Activated CD8-positive, alpha-beta T cell treated with anti-CD3 and anti-CD28 coated beads for 36 hours (primary cell): ENCODE measurements at regions of chr6 and their contacts with region 1.

Region 1: DNA sequence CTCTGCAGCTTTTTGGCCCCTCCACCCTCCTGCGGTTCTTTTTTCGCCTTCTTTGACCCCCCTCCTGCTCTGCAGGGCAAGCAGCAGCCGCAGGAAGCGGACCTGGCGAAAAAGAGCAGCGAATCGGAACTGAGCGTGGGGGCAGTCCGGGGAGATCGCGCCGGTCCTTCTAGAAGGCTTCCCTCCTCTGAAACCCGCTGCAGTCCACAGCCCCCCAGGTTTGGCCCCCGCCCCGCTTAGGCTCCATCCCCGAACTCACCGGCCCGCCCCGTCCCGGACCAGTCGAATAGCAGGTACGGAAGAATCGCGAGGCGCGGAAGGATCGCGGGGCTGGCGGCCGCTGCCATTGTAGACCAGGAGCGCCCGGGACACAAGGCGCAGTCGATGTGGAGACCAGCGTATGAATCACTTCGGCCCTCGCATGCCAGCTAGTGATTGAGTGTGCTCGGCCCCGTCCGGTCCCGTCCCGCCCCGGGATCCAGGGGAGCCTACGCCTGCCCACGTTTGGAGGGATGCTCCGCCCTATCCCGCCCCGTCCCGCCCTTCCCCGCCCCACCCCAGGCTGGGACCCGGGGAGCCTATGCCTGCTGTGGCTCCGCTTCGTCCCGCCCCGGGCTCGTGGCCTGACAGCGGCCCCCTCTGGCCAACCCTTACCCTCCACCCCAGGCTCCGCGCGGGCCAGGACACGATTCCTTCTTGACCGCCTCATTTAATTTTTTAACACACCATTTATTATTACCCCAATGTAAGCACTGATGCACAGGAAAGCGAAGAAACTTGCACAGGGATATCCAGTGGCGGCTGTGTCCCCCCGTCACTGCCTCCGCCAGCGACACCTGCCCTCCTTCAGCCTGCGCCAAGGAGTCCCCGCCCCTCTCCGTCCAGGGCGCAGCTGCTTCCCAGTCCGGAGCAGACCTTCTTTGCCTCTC is at the start of gene ULBP3:
- DNase-seq: peak; percentile 81
- ATAC-seq: peak; percentile 89
- H3K4me3 Mint-ChIP-seq: peak within 1 kb of the TSS; percentile 72
- H3K27ac Mint-ChIP-seq: no peak within 1 kb of the TSS
- H3K4me1 Mint-ChIP-seq: peaks cover 11% of the 10 kb centered on the region
- H3K27me3 Mint-ChIP-seq: peaks cover 9% of the 10 kb centered on the region
- CTCF ChIP-seq: peak; percentile 49
- total RNA-seq, gene ULBP3: 0.47 to 0.77 TPM

Region 2: GRCh38 chr6:149934249-149935156 is 134.5 kb before region 1 on chr6:
- CTCF ChIA-PET with region 1: no interaction called
- POLR2A ChIA-PET with region 1: no interaction called
- intact Hi-C with region 1: no loop called
- DNase-seq: peak; percentile 89
- ATAC-seq: peak; percentile 53
- H3K4me3 Mint-ChIP-seq: no peak overlapping the region
- H3K27ac Mint-ChIP-seq: no peak overlapping the region
- H3K4me1 Mint-ChIP-seq: peaks cover 19% of the 10 kb centered on the region
- H3K27me3 Mint-ChIP-seq: peaks cover 71% of the 10 kb centered on the region
- CTCF ChIP-seq: peak; percentile 79

Region 3: DNA sequence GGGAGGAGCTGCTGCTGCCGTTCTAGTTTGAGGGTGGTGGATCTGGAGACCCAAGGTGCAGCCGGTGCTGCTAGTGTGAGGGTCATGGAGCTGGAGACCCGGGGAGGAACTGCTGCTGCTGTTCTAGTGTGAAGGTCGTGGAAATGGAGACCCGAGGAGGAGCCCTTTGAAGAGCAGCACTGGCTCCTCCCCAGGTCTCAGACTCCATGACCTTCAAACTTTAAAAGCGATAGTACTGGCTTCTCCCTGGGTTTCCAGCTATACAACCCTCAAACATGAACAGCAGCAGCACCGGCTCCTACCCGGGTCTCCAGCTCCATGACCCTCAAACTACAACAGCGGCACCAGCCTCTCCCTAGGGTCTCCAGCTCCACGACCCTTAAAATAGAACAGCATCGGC is 15.5 kb before region 1 on chr6:
- CTCF ChIA-PET with region 1: interaction called, 24 read pairs
- POLR2A ChIA-PET with region 1: no interaction called
- intact Hi-C with region 1: no loop called
- DNase-seq: no peak
- ATAC-seq: no peak
- H3K4me3 Mint-ChIP-seq: no peak overlapping the region
- H3K27ac Mint-ChIP-seq: no peak overlapping the region
- H3K4me1 Mint-ChIP-seq: no peaks in the 10 kb centered on the region
- H3K27me3 Mint-ChIP-seq: peaks cover 55% of the 10 kb centered on the region
- CTCF ChIP-seq: no peak

Region 4: DNA sequence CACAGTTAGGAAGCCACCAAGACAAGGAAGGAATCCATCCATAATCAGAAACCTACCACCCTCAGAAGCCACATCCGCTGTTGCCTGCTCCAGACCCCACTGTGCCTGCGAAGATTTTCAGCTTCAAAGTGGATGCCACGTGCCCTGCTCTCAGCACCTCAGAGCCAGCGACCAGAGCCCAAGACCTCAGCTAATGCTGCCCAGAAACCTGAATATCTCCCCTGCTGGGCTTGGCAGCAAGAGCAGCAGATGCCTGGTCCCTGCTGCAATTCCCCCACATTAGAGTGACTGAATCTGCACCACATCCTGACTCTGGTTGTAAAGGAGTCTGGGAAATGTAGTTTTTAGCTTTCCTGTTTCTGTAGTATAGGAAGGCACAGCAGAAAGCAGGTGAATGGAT is 10.6 kb after region 1 on chr6:
- CTCF ChIA-PET with region 1: interaction called, 19 read pairs
- POLR2A ChIA-PET with region 1: no interaction called
- intact Hi-C with region 1: no loop called
- DNase-seq: peak; percentile 49
- ATAC-seq: peak; percentile 70
- H3K4me3 Mint-ChIP-seq: no peak overlapping the region
- H3K27ac Mint-ChIP-seq: no peak overlapping the region
- H3K4me1 Mint-ChIP-seq: peaks cover 20% of the 10 kb centered on the region
- H3K27me3 Mint-ChIP-seq: peaks cover 16% of the 10 kb centered on the region
- CTCF ChIP-seq: no peak

Region 5: GRCh38 chr6:150191809-150192208 is 122.8 kb after region 1 on chr6:
- CTCF ChIA-PET with region 1: no interaction called
- POLR2A ChIA-PET with region 1: no interaction called
- intact Hi-C with region 1: no loop called
- DNase-seq: no peak
- ATAC-seq: no peak
- H3K4me3 Mint-ChIP-seq: no peak overlapping the region
- H3K27ac Mint-ChIP-seq: no peak overlapping the region
- H3K4me1 Mint-ChIP-seq: no peaks in the 10 kb centered on the region
- H3K27me3 Mint-ChIP-seq: peaks cover 15% of the 10 kb centered on the region
- CTCF ChIP-seq: no peak

Region 6: GRCh38 chr6:150395398-150396009 is 326.5 kb after region 1 on chr6:
- CTCF ChIA-PET with region 1: interaction called, 162 read pairs
- POLR2A ChIA-PET with region 1: no interaction called
- intact Hi-C with region 1: loop called (anchors 5 kb)
- DNase-seq: peak; percentile 61
- ATAC-seq: peak; percentile 71
- H3K4me3 Mint-ChIP-seq: no peak overlapping the region
- H3K27ac Mint-ChIP-seq: no peak overlapping the region
- H3K4me1 Mint-ChIP-seq: no peaks in the 10 kb centered on the region
- H3K27me3 Mint-ChIP-seq: peaks cover 5% of the 10 kb centered on the region
- CTCF ChIP-seq: peak; percentile 64

Region 7: DNA sequence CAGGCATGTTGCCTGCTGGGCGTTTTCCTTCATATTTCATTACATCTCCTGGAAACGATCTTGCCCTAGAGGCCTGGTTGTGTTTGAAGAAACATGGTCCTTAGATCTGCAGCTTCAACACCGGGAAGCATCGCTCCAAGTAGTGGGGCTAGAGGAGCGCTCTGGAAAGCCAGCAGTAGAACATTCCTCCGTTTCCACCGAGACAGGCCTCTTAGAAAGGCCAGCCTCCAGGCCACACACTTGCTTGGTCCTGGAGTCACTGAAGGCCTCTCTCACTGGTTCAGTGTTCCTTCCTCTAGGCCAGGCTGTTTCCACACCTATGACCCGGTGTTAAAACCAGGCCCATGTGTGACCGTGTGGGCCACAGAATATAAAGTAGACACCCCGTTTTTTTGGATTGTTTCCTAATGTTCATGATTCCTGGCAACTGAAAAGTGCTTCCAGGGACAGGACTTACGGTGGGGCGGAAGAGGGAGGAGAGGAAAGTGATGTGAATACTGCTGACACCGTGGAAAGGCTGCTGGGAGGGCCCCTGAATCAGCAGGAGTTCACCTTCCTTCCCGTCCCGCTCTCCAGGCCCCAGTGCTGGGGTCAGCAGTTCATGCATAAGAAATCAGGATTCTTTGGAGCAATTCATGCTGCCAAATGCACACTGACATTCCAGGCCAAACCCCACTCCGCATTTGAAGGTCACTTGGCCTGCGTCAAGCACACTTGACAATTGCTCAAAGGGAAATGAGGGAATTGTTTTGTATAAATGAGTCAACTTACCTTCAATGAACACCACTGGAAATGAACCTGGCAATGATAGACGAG is 383.7 kb after region 1 on chr6:
- CTCF ChIA-PET with region 1: no interaction called
- POLR2A ChIA-PET with region 1: no interaction called
- intact Hi-C with region 1: no loop called
- DNase-seq: no peak
- ATAC-seq: no peak
- H3K4me3 Mint-ChIP-seq: no peak overlapping the region
- H3K27ac Mint-ChIP-seq: no peak overlapping the region
- H3K4me1 Mint-ChIP-seq: no peaks in the 10 kb centered on the region
- H3K27me3 Mint-ChIP-seq: no peaks in the 10 kb centered on the region
- CTCF ChIP-seq: no peak